A549 (cell line): ENCODE measurements at regions of chr5 and their contacts with region 1.

Region 1: DNA sequence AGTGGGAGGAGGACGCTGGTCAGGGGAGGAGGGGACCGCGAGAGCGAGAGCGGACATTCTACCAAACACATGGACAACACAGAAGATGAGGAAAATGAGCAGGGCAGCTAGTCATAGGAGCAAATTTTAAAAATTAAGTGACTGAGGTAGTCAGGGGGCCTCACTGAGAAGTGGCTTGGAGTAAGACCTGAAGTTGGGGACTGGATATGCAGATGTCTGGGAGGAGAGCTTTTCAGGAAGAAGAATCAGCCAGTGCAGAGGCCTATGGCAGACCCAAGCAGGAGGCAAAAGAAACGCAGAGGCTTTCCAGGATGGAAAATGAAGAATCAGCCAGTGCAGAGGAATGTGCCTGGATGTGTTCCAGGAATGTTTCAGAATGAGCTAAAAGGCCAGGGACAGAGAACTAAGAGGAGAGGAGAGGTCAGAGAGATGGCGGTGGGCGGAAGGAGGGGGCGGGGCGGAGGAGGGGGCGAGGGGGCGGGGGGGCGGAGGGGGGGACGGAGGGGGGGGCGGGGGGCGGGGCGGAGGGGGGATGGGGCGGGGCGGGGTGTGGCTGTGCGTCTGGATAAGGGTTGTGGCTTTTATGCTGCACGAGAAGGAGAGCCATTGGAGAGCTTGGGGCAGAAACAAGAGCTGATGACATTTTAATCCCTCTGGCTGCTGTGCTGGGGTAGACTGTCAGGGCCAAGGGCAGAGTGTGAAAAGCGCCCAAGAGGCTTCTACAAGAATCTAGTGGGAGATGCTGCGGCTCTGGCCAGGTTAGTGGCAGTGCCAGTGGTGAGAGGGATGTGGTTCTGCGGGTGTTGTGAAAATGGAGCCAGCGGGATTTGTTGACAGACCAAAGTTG is 129.6 kb downstream of the KCNIP1 start:
- DNase-seq: peak; percentile 69 to 77
- ATAC-seq: peak; percentile 33 to 62
- H3K4me3 ChIP-seq: peak overlapping the region; percentile 41
- H3K27ac ChIP-seq: peak overlapping the region; percentile 66 to 84
- H3K4me1 ChIP-seq: peaks cover 20% of the 10 kb centered on the region
- CTCF ChIP-seq: no peak
- EP300 ChIP-seq: no peak
- POLR2A ChIP-seq: no peak
- RAD21 ChIP-seq: no peak

Region 2: DNA sequence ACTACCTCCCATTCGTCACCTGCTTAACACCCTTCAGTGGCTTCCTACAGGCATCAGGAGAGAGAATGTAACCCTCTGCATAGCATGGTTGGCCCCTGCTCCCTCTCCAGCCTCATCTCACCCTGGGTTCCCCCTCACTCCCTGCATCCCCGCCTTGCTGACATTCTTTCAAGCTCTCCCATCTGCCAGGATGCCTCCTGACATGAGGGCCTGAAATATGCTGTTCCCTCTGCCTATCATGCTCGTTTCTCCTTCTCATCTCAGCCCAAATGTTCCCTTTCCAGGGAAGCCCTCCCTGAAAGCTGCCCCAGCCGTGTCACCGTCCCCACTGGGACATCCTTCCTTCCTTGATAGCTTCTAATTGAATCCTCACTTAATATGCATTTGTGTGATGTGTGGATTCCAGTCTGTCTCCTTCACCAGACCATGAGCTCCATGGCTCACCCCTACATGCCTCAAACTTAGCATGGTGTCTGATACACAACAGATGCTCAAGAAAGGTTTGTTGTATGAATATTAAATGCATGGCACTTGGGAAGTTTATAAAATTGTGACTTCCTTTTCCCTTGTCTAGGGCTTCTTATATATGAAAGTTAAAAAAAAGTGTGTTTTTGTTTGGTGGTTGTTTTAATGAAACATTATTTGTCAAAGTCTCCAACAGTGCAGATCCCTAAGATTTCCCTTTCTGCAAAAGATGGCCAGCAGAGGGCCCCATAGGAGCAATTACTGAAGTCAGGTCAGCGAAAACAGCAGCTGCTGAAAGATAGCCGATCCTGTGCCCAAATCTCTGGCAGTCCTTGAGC is 407.9 kb before region 1 on chr5:
- CTCF ChIA-PET with region 1: interaction called, 81 read pairs
- POLR2A ChIA-PET with region 1: no interaction called
- DNase-seq: peak; percentile 66 to 68
- ATAC-seq: peak; percentile 82 to 96; a peak in 4 of 6 replicates
- H3K4me3 ChIP-seq: no peak overlapping the region
- H3K27ac ChIP-seq: no peak overlapping the region
- H3K4me1 ChIP-seq: peaks cover 1% of the 10 kb centered on the region
- CTCF ChIP-seq: peak; percentile 85
- EP300 ChIP-seq: no peak
- POLR2A ChIP-seq: no peak
- RAD21 ChIP-seq: peak; percentile 86 to 90

Region 3: GRCh38 chr5:170420780-170421412 is 212.6 kb before region 1 on chr5:
- CTCF ChIA-PET with region 1: interaction called, 74 read pairs
- POLR2A ChIA-PET with region 1: no interaction called
- DNase-seq: peak; percentile 71 to 79
- ATAC-seq: peak; percentile 71 to 92; a peak in 5 of 6 replicates
- H3K4me3 ChIP-seq: no peak overlapping the region
- H3K27ac ChIP-seq: no peak overlapping the region
- H3K4me1 ChIP-seq: peaks cover 7% of the 10 kb centered on the region; the same call in 2 of the 3 replicates
- CTCF ChIP-seq: peak; percentile 82
- EP300 ChIP-seq: no peak
- POLR2A ChIP-seq: no peak
- RAD21 ChIP-seq: peak; percentile 73 to 74

Region 4: DNA sequence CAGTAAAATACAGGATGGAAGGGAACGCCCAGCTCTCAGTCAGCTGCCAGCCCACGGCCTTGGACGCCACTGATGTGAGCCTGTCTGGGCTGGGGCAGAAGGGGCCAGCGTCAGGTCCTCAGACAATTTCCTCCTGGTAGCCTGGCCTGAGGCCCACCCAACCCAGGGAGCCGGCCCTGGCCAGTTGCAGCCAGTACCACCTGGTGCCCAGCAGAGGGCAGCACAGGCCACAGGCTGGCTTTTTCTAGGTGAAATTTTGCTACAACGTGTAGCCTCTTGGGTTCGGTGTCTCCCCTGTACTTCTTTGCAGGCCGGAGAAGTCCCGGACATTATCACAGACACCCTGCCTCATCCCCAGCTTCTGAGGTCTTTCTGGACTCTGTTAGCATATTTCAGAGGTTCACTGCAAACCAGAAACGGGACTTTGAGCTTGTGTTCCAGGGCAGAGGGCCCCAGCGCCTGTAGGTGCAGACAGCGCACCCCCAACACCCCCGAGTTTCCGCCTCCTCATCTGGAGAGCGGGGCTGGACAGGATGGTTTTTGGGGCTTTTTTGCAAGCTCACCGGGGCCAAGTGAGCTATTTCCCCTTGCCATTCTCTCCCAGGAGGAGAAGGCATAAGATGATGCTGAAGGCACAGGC is 198.4 kb before region 1 on chr5:
- CTCF ChIA-PET with region 1: interaction called, 508 read pairs
- POLR2A ChIA-PET with region 1: interaction called, 6 read pairs
- DNase-seq: peak; percentile 48 to 53
- ATAC-seq: peak; percentile 83 to 95
- H3K4me3 ChIP-seq: no peak overlapping the region
- H3K27ac ChIP-seq: no peak overlapping the region
- H3K4me1 ChIP-seq: no peaks in the 10 kb centered on the region
- CTCF ChIP-seq: peak; percentile 92
- EP300 ChIP-seq: no peak
- POLR2A ChIP-seq: no peak
- RAD21 ChIP-seq: peak; percentile 97 to 98

Region 5: GRCh38 chr5:170597109-170597751 is 36.2 kb before region 1 on chr5:
- CTCF ChIA-PET with region 1: interaction called, 28 read pairs
- POLR2A ChIA-PET with region 1: no interaction called
- DNase-seq: peak in 1 of 2 experiments; percentile 15
- ATAC-seq: peak; percentile 32 to 40; a peak in 2 of 6 replicates
- H3K4me3 ChIP-seq: no peak overlapping the region
- H3K27ac ChIP-seq: no peak overlapping the region
- H3K4me1 ChIP-seq: no peaks in the 10 kb centered on the region
- CTCF ChIP-seq: no peak
- EP300 ChIP-seq: no peak
- POLR2A ChIP-seq: no peak
- RAD21 ChIP-seq: no peak

Region 6: GRCh38 chr5:170614720-170615119 is 18.7 kb before region 1 on chr5:
- CTCF ChIA-PET with region 1: interaction called, 92 read pairs
- POLR2A ChIA-PET with region 1: no interaction called
- DNase-seq: peak in 1 of 2 experiments; percentile 59
- ATAC-seq: peak; percentile 31 to 79; a peak in 4 of 6 replicates
- H3K4me3 ChIP-seq: no peak overlapping the region
- H3K27ac ChIP-seq: peak overlapping the region in 1 of 2 experiments; percentile 30; a peak in 1 of 6 replicates
- H3K4me1 ChIP-seq: peaks cover 14% of the 10 kb centered on the region
- CTCF ChIP-seq: no peak
- EP300 ChIP-seq: no peak
- POLR2A ChIP-seq: no peak
- RAD21 ChIP-seq: no peak

Region 7: DNA sequence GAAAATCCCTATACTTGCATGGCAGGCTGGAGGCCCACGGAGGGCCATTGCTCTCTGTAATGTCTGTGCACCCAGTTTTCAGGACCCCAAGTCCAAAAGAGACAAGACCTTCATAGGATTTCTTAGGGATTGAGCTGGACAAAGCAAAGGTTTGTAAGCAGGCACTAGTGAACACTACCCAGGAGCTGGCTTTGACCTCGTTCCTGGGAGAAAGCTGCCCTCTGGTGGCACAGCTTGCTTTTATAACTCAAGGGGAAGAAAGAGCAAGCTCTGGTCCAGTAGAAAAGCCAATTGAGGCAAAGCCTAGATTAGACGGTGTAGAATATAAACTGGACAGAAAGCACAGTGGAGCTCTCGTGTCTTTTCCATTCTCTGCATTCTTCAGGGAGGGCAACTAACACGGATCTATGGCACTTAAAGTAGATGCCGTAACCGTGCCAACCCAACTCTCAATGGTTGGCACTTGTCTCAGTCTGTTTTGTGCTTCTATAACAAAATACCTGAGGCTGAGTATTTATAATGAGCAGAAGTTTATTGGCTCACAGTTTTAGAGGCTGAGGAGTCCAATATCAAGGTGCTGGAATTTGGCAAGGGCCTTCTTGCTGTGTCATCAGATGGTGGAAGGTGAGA is 158.0 kb after region 1 on chr5:
- CTCF ChIA-PET with region 1: interaction called, 97 read pairs
- POLR2A ChIA-PET with region 1: interaction called, 3 read pairs
- DNase-seq: peak; percentile 53 to 66
- ATAC-seq: peak; percentile 87 to 95
- H3K4me3 ChIP-seq: no peak overlapping the region
- H3K27ac ChIP-seq: no peak overlapping the region
- H3K4me1 ChIP-seq: no peaks in the 10 kb centered on the region
- CTCF ChIP-seq: peak; percentile 73
- EP300 ChIP-seq: no peak
- POLR2A ChIP-seq: no peak
- RAD21 ChIP-seq: peak; percentile 84 to 85

Region 8: GRCh38 chr5:171152382-171152781 is 518.9 kb after region 1 on chr5:
- CTCF ChIA-PET with region 1: no interaction called
- POLR2A ChIA-PET with region 1: no interaction called
- DNase-seq: peak; percentile 2 to 51
- ATAC-seq: peak; percentile 82 to 86
- H3K4me3 ChIP-seq: no peak overlapping the region
- H3K27ac ChIP-seq: no peak overlapping the region
- H3K4me1 ChIP-seq: no peaks in the 10 kb centered on the region
- CTCF ChIP-seq: peak; percentile 31
- EP300 ChIP-seq: no peak
- POLR2A ChIP-seq: no peak
- RAD21 ChIP-seq: peak; percentile 27 to 45; a peak in 3 of 5 replicates